ENCODE measurements at regions of chr3 and their contacts with region 1.

Region 1: DNA sequence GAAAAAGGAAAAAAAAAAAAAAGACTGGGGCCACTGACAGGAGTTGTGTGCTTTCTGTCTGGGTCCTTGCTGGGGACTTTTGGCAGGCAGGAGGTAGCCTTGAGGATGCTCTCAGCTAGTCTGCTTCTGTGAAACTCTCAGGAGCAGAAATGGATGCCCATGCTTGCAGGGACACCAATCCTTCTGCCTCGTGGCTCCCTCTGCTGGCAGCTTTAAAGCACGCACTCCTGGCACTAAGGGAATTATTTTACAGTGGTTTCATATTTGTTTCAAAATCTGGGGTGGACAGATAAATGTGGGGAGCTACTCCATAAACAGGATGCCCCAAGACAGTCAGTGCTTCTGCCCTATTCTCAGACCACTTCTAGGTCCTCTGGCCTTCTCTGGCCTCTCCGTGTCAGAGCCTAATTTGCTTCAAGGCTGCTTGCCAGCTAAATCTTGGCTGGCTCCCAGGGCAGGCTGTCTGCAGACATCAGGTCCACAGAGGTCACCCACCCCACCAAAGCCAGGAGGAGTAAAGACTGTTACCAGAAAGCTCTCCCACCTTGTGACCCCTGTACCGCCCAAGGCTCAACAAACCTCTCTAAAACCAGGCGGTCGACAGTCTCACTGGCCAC is 17.1 kb downstream of the TRAIP start:
- DNase-seq: peak; percentile 40 to 72
- ATAC-seq: peak; percentile 82 to 91; a peak in 5 of 6 replicates
- H3K4me3 ChIP-seq: no peak overlapping the region
- H3K27ac ChIP-seq: no peak overlapping the region
- H3K4me1 ChIP-seq: no peaks in the 10 kb centered on the region
- CTCF ChIP-seq: peak; percentile 76
- EP300 ChIP-seq: no peak
- POLR2A ChIP-seq: no peak
- RAD21 ChIP-seq: peak; percentile 70 to 71

Region 2: GRCh38 chr3:49539659-49540560 is 299.4 kb before region 1 on chr3:
- CTCF ChIA-PET with region 1: interaction called, 14 read pairs
- POLR2A ChIA-PET with region 1: no interaction called
- DNase-seq: peak; percentile 57 to 90
- ATAC-seq: peak; percentile 94 to 97
- H3K4me3 ChIP-seq: peak overlapping the region; percentile 49
- H3K27ac ChIP-seq: peak overlapping the region; percentile 72 to 86
- H3K4me1 ChIP-seq: peaks cover 5% of the 10 kb centered on the region; the same call in 2 of the 3 replicates
- CTCF ChIP-seq: peak; percentile 68
- EP300 ChIP-seq: no peak
- POLR2A ChIP-seq: peak; percentile 50
- RAD21 ChIP-seq: peak; percentile 87 to 93

Region 3: DNA sequence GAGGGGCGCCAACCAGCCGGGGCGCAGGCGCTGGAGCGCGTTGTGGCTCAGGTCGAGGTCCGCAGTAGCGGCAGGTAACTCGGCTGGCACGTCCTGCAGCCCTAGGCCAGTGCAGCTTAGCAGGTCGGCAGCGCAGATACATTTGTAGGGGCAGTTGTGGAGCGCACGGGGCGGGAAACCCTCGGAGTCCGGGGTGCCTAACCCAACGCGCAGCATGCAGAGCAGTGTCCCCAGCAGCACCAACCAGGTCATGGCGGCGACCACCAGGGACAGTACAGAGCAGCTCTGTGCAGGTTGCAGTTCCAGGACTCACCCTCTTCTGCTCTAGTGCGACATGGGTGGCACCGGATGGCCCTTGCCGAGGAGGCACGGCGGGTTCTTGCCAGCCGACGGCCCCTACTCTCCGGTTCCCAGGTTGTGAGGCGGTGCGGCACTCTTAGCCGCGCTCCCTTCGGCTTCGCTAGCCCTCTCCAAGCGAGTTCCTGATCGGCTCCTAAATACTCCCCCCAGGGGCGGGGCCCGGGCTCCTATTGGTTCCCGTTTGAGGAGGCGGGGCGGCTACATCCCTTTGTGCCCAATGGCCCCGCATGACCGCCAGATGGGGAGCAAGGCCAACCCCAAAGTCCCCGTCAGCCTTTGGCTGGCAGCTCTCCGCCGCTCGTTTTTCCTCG is 120.0 kb before region 1 on chr3 and contains the start of gene AMIGO3:
- CTCF ChIA-PET with region 1: interaction called, 18 read pairs
- POLR2A ChIA-PET with region 1: no interaction called
- DNase-seq: peak; percentile 82 to 96
- ATAC-seq: peak; percentile 63 to 77
- H3K4me3 ChIP-seq: peak within 1 kb of the TSS; percentile 34; the same call in 2 of the 3 replicates
- H3K27ac ChIP-seq: peak within 1 kb of the TSS in 1 of 2 experiments; percentile 79; a peak in 3 of 6 replicates
- H3K4me1 ChIP-seq: peaks cover 8% of the 10 kb centered on the region
- CTCF ChIP-seq: no peak
- EP300 ChIP-seq: no peak
- POLR2A ChIP-seq: peak; percentile 63
- RAD21 ChIP-seq: no peak
- polyA plus RNA-seq, gene AMIGO3: 0.03 TPM in 1 of 2 replicates, not detected in the other

Region 4: GRCh38 chr3:49826016-49826415 is 13.3 kb before region 1 on chr3:
- CTCF ChIA-PET with region 1: interaction called, 47 read pairs
- POLR2A ChIA-PET with region 1: no interaction called
- DNase-seq: no peak
- ATAC-seq: no peak
- H3K4me3 ChIP-seq: no peak overlapping the region
- H3K27ac ChIP-seq: no peak overlapping the region
- H3K4me1 ChIP-seq: no peaks in the 10 kb centered on the region
- CTCF ChIP-seq: no peak
- EP300 ChIP-seq: no peak
- POLR2A ChIP-seq: no peak
- RAD21 ChIP-seq: no peak

Region 5: DNA sequence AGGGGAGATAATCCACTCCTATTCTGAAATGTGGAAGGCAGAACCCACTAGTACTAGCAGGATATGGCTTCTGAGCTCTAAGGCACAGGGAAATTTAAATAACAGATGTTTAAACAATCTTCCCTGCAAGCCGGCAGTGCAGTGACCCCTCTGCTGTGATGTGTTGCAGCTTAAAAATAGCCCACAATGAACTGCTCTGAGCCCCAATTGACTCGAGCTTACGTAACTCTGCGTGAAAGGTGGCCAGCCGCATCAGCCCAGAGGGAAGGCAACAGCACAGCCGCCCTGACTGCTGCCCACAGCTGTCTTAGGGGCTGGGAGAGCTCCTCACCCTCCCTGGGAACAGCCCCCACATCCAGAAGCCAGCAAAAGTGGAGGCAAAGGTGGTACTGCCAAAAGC is 42.9 kb after region 1 on chr3:
- CTCF ChIA-PET with region 1: interaction called, 23 read pairs
- POLR2A ChIA-PET with region 1: no interaction called
- DNase-seq: no peak
- ATAC-seq: no peak
- H3K4me3 ChIP-seq: no peak overlapping the region
- H3K27ac ChIP-seq: no peak overlapping the region
- H3K4me1 ChIP-seq: no peaks in the 10 kb centered on the region
- CTCF ChIP-seq: no peak
- EP300 ChIP-seq: no peak
- POLR2A ChIP-seq: no peak
- RAD21 ChIP-seq: no peak

Region 6: DNA sequence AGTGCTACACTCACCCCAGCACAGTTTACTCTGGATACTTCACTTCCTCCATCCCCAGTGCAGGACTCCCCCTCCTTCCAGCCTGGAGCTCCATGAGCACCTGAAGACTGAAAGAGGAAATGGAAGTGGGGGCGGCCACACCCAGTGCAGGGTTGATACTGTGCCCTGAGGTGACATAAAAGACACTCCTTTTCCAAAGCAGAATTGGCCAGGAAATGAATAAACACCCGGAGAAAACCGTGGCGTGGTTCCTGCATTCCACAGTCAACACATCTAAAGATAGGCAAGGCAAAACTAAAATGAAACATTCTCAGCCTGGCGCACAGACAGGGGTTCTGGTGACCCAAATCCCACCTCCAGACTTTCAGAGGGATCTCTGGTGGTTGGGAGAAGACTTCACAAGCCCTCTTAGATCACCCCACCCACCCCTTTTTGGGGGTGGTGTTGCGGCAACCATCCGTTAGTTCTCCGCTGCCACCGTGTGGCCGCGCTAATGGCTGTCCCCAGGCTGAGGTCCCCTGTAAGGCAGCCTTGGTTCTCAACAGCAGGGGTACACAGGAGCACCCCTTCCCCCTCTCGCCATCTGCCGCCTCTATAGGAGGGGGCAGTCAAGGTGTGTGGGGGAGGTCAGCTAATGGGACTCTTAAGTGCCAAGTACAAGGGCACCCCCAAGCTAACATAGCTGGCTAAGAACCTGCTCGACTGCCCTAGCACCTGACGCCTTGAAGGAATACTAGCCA is 66.9 kb after region 1 on chr3:
- CTCF ChIA-PET with region 1: interaction called, 46 read pairs
- POLR2A ChIA-PET with region 1: no interaction called
- DNase-seq: peak; percentile 55 to 82
- ATAC-seq: peak; percentile 63 to 74; a peak in 5 of 6 replicates
- H3K4me3 ChIP-seq: peak overlapping the region; percentile 24; the same call in 1 of the 3 replicates
- H3K27ac ChIP-seq: peak overlapping the region; percentile 51 to 84
- H3K4me1 ChIP-seq: peaks cover 42% of the 10 kb centered on the region
- CTCF ChIP-seq: peak; percentile 74
- EP300 ChIP-seq: no peak
- POLR2A ChIP-seq: no peak
- RAD21 ChIP-seq: peak; percentile 81 to 83

Measured in A549 (cell line).